ENCODE measurements at regions of chr5 and their contacts with region 1.

Region 1: DNA sequence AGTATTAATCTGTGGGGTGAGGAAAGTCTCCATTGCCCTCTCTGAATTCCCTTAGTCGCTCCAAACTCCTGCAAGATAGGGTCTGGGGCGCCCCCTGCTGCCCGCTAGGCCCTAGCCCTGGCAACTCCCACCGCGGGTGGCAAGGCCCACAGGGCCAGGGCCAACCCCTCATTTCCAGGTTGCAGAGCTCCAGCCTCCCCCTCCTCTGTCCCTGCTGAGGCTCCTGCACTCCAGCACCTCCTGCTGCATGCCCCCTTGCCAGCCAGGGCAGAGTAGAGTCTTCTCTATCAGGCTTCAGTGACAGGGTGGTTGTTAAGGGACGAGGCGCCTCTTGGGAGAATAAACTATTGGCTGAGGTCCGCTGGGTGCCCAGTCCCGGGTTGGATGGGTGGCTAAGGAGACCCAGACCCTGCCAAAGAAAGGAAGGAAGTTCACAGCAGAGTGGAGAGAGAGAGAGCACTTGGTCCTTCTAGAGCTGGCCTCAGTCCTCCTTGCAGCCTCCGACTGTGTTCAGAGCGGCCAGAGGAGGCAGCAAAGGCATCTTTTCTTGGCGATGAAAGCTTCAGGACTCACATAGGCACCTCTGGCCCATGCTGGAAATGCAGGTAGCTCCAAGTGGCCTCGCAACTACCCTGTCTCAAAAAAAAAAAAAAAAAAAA is 45.6 kb downstream of the SAR1B start:
- DNase-seq: peak; percentile 78
- CTCF ChIP-seq: peak; percentile 96

Region 2: GRCh38 chr5:133907075-133907474 is 679.9 kb before region 1 on chr5:
- in situ Hi-C with region 1: no loop called
- DNase-seq: no peak
- CTCF ChIP-seq: no peak

Region 3: DNA sequence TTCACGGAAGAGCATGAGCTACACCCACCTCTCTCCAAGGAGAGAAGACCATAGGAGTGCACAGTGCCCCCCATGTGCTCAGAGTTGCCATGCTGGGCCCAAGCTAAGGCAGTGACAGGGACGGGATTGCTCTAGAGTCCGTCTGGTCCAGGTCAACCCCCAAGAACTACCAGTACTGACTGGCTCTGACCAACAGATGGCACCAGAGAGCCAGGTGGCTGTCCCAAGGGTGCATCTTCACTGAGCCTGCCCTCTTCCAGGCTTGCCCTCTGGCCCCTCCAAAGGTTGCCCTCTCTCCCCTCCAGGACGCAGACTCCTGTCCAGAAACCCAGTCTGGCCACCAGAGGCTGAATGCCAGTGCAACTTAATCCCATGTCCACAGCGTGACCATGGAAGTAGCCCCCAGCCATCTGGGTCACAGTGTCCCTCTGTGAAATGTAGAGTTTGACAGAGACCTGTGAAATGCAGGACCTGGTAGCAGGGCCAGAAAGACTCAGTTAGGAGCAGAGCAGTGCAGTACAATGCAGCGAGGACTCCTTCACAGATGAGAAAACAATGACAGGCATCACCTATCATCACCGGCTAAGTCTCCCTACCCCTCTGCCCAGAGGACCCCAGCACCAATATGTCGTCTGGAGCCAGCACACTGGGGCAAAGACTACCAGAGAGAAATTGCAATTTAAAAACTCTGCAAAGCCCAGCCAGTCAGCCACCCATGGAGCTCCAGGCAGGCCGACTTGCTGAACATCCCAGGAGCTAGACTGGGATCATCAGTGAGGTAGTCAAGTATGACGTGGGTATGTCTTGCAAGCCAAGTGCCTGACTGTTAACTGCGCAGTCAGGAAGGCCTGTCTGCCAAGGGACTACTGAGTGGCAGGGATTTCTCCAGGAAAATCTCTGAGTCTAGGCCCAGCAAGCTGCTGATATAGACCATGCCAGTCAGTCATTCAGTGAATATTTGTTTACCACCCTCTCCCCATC is 402.6 kb before region 1 on chr5:
- in situ Hi-C with region 1: loop called (anchors 10 kb)
- DNase-seq: peak; percentile 79
- CTCF ChIP-seq: peak; percentile 95

Region 4: DNA sequence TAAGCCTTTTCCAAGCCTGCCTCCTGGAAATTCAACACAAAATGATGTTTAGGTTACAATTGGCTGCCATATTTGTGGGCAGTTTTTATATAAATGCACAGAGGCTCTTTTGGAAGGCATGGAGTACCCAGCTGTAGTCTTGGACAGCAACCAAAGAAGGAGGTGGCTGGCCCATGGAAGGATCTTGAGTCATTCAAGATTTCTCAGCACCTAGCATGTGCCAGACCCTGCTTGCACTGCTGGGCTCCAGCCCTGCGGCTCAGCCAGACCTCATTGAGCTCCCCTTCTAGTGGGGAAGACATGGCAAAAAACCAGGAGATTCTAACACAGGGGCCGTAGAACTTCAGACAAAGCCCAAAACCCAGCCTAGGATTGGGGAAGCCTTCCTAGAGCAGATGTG is 39.4 kb before region 1 on chr5:
- in situ Hi-C with region 1: no loop called
- DNase-seq: no peak
- CTCF ChIP-seq: no peak